Cardiac septum (tissue), 1 donor: ENCODE measurements at regions of chr11 and their contacts with region 1.

Region 1: GRCh38 chr11:13329670-13330356 is 52.2 kb downstream of the BMAL1 start:
- DNase-seq: no peak

Region 2: DNA sequence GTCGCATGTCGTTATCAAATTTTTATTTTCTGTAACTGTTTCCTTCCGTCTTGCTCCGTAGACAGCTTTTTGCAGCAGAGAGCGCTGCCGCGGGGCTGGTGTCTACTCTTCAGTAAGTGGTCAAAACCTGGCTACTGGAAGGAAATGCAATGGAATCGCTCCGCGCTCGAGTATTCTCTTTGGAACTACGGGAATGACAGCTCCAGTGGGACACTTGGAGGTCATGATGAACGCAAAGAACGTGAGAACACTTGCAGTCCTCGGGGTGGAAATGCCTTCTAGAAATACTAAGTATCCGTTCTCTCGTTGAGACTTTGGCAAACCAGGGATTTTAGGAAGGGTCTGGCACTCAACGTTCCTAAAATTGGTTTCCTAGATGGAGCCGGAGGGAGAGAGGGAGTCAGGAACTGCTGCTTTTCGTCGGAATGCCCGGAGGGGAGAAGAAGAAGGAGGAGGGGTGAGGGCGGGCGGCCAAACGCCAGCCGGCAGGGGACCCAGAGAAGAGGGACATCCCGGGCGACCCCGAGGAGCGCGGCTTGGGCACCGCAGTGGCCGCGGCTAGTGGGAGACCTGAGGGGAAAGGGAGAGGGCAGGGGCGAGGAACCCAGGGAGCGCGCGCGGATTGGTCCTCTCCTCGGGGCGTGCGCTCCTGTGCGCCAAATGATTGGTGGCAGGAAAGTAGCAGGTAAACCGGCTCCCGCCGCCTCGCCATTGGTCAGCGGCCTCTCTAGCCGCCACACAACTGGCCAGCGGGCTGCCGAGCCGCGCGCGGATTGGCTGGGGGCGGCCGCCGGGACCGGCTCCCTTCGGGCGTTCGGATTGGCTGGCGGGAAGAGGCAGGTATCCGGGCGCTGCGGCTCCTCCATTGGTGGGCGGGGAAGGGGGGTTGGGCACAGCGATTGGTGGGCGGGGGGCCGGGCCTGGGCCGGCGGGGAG is 52.7 kb before region 1 on chr11:
- intact Hi-C with region 1: loop called (anchors 2 kb)
- DNase-seq: peak; percentile 99

Region 3: GRCh38 chr11:13448876-13449275 is 119.1 kb after region 1 on chr11:
- intact Hi-C with region 1: no loop called
- DNase-seq: no peak

Region 4: DNA sequence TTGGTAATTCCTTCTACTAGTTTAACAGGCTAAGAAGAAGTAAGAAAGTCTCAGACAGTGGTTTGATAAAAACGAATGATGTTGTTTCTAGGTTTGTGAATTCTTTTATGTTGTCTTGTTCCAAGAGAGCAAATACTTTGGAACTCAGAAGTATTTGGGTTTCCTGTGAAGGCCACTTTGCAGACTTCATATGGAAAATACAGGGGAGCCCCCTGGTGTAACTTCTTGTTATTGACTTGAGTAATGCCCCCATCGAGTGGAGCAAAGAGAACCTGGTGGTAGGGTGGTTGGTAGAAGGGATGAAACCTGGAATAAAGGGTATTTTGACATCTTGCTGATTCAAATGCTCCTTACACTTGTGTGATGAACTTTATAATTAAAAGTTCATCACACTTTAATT is 206.0 kb after region 1 on chr11:
- intact Hi-C with region 1: no loop called
- DNase-seq: no peak